Upper lobe of right lung (tissue), 1 donor: ENCODE measurements at regions of chr13 and their contacts with region 1.

Region 1: GRCh38 chr13:51286135-51287002 is 53.1 kb upstream of the SERPINE3 start:
- DNase-seq: peak; percentile 88
- ATAC-seq: peak; percentile 95
- H3K4me3 ChIP-seq: no peak overlapping the region
- H3K27ac ChIP-seq: no peak overlapping the region
- H3K4me1 ChIP-seq: no peaks in the 10 kb centered on the region
- H3K27me3 ChIP-seq: no peaks in the 10 kb centered on the region
- CTCF ChIP-seq: peak; percentile 95

Region 2: DNA sequence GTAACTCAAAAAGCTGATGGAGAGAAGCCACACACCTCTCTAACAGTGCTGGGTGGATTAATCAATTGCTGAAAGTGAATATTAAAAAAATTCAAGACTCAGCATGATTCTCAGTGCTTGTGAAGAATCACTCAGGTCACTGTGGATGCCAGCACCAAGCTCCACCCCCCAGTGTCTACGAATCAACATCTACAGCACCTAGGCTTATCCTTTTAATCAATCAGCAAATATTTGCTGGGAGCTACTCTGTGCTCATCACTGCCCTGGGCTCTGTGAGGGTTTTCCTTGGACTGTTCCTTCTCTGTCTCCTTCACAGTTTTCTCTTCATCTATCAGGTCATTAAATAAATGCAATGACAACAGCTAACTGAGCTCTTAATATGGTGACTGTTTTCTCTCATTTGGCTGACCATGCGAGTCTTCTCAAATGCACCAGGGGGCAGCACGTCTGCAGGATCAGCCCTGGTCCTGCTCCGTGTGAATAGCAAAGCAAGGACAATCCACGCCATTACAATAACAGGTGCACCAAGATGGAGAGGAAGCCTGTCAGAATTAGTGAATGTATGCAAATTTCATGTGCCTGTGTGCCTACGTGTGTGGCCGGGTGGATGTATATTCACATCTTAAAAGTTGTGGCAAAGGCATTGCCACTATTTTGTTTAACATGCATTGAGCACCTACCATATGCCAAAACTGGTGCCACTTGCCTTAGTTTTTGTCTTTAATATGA is 160.7 kb before region 1 on chr13:
- intact Hi-C with region 1: loop called (anchors 5 kb)
- DNase-seq: peak; percentile 69
- ATAC-seq: peak; percentile 95
- H3K4me3 ChIP-seq: no peak overlapping the region
- H3K27ac ChIP-seq: no peak overlapping the region
- H3K4me1 ChIP-seq: no peaks in the 10 kb centered on the region
- H3K27me3 ChIP-seq: no peaks in the 10 kb centered on the region
- CTCF ChIP-seq: peak; percentile 77

Region 3: GRCh38 chr13:51148952-51149573 is 137.3 kb before region 1 on chr13:
- intact Hi-C with region 1: loop called (anchors 5 kb)
- DNase-seq: no peak
- ATAC-seq: peak; percentile 44
- H3K4me3 ChIP-seq: no peak overlapping the region
- H3K27ac ChIP-seq: no peak overlapping the region
- H3K4me1 ChIP-seq: no peaks in the 10 kb centered on the region
- H3K27me3 ChIP-seq: no peaks in the 10 kb centered on the region
- CTCF ChIP-seq: peak; percentile 54